ENCODE measurements at regions of chr11 and their contacts with region 1.

Region 1: DNA sequence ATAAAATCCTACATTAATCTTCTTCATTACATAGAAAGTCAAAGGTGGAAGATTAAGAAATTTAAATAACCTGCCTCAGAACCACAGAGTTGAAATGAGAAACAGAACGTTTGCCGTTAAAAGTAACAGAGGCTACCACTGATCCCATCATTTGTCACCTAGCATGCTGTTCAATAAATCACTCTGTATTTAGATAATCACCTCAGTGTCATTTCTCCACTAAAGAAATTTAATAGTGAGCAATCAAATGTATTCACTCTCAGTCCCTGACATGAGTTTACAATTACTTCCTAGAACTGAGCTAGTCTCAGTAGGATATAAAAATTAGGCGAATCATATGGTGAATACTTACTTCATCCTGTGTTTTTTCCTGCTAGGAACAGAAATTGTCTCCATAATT is 169.6 kb downstream of the MSANTD4 start:
- DNase-seq: peak; percentile 14
- H3K4me3 ChIP-seq: no peak overlapping the region
- H3K27ac ChIP-seq: no peak overlapping the region
- H3K4me1 ChIP-seq: no peaks in the 10 kb centered on the region
- H3K27me3 ChIP-seq: no peaks in the 10 kb centered on the region
- CTCF ChIP-seq: no peak

Region 2: DNA sequence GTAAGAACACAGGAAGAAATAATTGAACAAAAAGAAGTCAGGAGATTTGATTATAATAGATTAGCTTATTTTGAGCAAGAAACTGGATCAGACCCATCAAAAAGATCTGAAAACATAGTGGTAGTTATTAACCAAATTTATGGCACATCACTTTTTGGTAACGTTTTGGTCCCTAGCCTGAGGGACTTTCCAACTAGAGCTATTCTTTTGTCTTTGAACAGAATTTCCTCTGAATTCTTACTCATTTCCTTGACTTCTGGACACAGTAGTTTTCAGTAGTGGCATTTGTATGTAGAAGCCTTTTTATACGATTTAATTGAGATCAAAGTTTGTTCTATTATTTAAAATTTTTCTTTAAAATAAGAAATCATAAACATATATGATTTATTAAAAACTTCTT is 1591.9 kb before region 1 on chr11:
- CTCF ChIA-PET with region 1: no interaction called
- POLR2A ChIA-PET with region 1: no interaction called
- intact Hi-C with region 1: loop called (anchors 5 kb)
- DNase-seq: no peak
- H3K4me3 ChIP-seq: no peak overlapping the region
- H3K27ac ChIP-seq: no peak overlapping the region
- H3K4me1 ChIP-seq: no peaks in the 10 kb centered on the region
- H3K27me3 ChIP-seq: no peaks in the 10 kb centered on the region
- CTCF ChIP-seq: no peak

Region 3: GRCh38 chr11:105609341-105609781 is 243.0 kb before region 1 on chr11:
- CTCF ChIA-PET with region 1: no interaction called
- POLR2A ChIA-PET with region 1: no interaction called
- intact Hi-C with region 1: no loop called
- DNase-seq: peak; percentile 34
- H3K4me3 ChIP-seq: no peak overlapping the region
- H3K27ac ChIP-seq: no peak overlapping the region
- H3K4me1 ChIP-seq: peaks cover 6% of the 10 kb centered on the region
- H3K27me3 ChIP-seq: peaks cover 84% of the 10 kb centered on the region
- CTCF ChIP-seq: peak; percentile 54; the same call in 1 of the 2 replicates

Region 4: DNA sequence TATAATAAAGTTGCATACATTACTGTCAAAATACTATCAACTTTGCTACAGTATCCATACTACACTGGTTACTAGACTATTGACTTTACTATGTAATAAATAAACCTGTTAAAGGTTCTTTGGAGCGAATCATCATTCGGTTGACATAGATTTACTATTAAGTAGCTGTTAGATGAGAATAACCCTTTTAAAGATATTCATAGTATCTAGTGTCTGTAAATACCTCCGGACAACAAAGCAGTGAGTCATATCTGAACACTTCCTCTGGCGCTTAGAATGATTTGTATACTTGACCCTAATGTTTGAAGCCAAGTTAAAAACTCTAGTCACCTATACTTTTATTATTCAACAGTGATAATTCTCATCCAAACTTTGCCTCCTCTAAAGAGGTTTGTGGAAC is 84.9 kb after region 1 on chr11:
- CTCF ChIA-PET with region 1: no interaction called
- POLR2A ChIA-PET with region 1: no interaction called
- intact Hi-C with region 1: no loop called
- DNase-seq: peak; percentile 18
- H3K4me3 ChIP-seq: no peak overlapping the region
- H3K27ac ChIP-seq: no peak overlapping the region
- H3K4me1 ChIP-seq: no peaks in the 10 kb centered on the region
- H3K27me3 ChIP-seq: no peaks in the 10 kb centered on the region
- CTCF ChIP-seq: no peak

Measured in A673 (cell line).